ENCODE measurements at regions of chr2 and their contacts with region 1.

Region 1: DNA sequence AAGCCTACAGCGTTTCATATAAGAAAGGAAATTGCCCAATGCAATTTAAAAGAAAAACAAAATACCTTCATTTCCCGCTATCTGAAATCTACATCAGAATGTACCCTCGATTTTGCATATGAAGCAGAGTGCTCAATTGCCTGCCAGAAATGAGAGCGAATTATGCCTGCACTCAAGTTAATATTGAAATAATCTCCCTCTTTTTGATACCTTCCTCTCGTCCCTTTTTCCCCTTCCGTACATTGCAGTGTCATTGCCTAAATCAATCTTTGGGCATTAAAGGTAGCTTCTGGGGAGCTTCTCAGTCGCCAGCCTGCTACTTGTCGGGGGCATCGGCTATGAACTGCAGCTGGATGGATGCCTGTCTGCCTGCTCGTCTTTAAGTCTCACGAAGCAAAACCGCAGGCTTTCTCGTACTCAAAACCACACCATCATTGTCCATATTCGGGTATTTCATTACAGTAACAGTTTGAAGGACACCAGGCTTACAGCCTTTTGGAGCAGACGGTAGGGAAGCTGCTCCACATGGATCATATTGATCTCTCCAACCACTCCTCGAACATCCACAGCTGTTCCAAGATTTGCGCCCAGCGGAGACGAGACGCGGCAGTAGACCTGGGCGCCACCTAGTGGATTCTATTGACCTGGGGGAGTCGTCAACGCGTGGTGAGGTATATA is 64.0 kb upstream of the HNRNPA3 start:
- DNase-seq: no peak
- H3K4me3 ChIP-seq: peak overlapping the region; percentile 54
- CTCF ChIP-seq: peak; percentile 91

Region 2: DNA sequence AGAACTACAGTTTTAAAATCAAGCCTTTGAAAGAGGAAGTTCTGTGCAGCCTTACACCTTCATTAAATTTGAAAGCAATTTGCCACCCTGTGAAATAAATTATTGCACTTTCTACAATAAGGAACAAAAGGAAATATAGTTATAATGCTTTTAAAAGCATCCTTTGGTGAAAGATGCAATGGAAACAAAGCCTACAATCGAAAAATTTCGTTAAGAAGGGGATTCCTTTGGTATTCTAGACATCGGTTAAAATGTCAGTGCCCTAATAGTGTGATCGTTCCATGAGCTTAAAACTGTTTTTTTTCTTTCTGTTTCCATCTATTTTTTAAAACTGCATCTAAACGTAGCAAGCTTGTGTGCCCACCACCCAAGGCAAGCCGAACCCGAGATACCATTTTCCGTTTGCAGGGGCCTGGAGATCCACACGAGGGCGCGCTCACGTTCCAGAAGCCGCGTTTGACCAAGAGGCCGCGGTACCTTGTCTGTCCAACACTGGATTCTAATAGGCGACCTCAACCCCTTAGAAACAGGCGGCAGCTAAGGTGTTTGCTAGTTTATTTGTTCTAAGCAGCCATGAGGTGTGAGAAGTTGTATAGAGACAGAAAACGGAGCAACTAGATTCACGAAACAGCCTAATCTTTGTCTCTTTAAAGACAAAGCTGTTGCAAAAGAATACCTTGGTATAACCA is 1037.5 kb before region 1 on chr2:
- CTCF ChIA-PET with region 1: interaction called, 73 read pairs
- POLR2A ChIA-PET with region 1: no interaction called
- DNase-seq: no peak
- H3K4me3 ChIP-seq: no peak overlapping the region
- CTCF ChIP-seq: peak; percentile 85

Region 3: DNA sequence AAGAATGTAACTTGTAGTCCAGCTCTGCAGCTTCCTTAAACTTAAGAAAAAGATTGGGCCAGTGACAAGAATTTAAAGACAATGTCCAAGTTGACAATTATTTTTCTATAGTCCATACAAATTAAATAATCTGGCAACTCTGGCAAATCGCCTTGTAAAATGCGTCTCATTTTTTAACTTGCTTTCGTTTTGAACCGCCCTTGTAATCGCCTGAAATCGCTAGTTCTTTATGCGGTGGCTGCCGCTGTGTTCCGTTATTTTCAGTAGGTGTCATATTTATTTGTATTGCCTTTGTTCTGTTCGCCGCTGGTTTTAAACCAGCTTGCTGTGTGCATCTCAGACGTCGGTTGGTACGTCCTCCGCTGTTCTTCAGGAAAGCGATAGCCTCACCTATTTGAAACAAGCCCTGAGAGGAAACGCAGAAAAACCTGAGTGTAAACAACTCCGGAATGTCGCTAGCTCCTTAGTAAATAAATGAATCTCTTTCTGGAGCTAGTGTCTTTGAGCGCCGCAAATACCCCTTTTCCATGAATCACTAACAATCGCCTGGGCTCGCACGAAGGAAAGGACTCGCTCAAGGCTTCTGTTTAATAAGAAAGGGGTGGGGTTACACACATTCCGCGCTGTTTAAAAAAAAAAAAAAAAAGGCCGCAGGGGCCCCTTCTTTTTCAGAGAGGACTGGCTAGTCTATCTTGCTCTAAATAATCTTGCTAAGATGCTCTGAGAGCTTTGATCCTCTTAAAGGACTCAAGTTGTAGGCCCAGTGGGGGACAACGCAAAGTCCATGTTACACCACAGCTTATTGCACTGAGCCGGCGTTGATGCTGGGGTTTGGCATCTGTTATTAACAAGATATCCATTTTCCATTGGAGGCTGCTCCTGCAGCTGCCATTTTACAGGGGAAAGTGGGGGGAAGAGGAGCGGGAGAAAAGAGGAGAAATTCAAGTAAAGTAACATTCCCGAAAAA is 1016.1 kb before region 1 on chr2:
- CTCF ChIA-PET with region 1: interaction called, 151 read pairs
- POLR2A ChIA-PET with region 1: no interaction called
- DNase-seq: no peak
- H3K4me3 ChIP-seq: peak overlapping the region; percentile 50
- CTCF ChIP-seq: no peak

Measured in AG04449 (cell line).